ENCODE measurements at regions of chr11 and their contacts with region 1.

Region 1: DNA sequence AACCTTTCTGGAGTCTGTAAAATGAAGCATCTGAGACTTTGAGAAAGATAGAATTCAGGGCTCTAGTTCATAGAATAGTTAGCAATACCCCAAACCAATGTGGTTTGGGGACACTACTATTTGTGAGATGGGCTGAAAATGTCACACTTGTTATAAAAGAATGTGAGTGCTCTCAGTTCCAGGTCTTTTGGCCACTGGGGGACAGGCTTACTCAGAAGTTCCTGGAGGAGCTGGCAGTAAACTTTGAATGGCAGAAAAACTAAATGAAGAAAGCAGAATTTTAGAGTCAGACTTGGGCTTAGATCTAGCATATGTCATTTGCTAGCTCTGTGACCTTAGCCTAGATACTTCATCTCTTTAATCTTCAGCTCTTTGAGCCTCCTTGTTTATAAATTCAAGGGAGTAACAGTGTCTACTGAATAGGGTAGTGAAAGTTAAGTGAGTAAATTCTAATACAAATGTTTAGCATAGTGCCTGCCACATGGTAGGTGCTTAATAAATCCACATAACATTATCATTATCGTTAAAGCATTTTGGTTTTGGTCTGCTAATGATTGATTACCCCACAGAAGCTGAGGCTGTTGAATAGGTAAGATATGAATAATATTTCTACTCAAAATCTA is 3.7 kb downstream of the LYVE1 start:
- DNase-seq: no peak
- H3K4me3 ChIP-seq: peak overlapping the region in 5 of 8 donors; percentile 21 to 62 (median 37)
- H3K27ac ChIP-seq: peak overlapping the region in 6 of 8 donors; percentile 14 to 84 (median 80)
- H3K4me1 ChIP-seq: peaks cover 0 to 58% (median 29%) of the 10 kb centered on the region in 6 donors
- H3K27me3 ChIP-seq: no peaks in the 10 kb centered on the region
- CTCF ChIP-seq: peak in 9 of 11 experiments; percentile 13 to 53 (median 39)
- POLR2A ChIP-seq: no peak

Region 2: DNA sequence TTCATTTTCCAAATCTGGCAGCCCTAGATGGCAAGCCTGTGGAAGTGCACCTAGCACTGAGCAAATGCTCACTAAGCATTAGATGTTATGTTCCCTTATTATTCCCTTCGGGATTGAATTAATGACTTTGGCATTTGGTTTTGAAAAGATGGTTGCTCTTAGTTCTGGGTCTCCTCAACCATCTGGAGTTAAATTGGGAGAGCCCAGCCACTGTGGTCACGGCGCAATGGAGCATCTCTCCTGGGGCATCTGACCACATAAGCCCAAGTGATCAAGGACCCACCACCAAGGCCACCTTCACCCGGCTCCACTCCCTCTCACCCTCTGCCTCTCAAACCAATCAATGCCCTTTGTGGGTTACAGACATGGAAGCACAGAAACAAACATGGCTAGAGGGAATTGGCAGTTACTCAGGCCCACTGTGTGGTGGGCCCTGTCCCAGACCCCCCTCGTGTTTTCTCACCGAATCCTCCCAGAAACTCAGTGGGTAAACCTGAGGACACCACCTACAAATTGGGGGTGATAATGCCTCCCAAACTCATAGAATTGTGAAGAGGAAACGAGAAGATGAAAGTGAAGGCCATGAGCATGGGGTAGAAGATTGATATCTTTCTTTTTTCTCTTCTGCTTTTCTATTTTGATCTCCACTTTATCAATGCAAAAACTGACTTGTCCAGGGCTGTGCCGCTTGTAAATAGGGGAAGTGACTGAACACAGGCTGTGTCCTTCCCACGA is 76.5 kb after region 1 on chr11:
- intact Hi-C with region 1: loop called (anchors 10 kb)
- DNase-seq: no peak
- H3K4me3 ChIP-seq: peak overlapping the region in 1 of 8 donors; percentile 16
- H3K27ac ChIP-seq: peak overlapping the region; percentile 30 to 90 (median 79)
- H3K4me1 ChIP-seq: peaks cover 24 to 80% (median 57%) of the 10 kb centered on the region in 6 donors
- H3K27me3 ChIP-seq: no peaks in the 10 kb centered on the region
- CTCF ChIP-seq: no peak
- POLR2A ChIP-seq: no peak

Region 3: GRCh38 chr11:11416502-11416901 is 851.7 kb after region 1 on chr11:
- intact Hi-C with region 1: no loop called
- DNase-seq: no peak
- H3K4me3 ChIP-seq: no peak overlapping the region
- H3K27ac ChIP-seq: no peak overlapping the region
- H3K4me1 ChIP-seq: peaks cover 0 to 27% (median 14%) of the 10 kb centered on the region in 6 donors
- H3K27me3 ChIP-seq: peaks cover 0 to 57% (median 0%) of the 10 kb centered on the region in 7 donors
- CTCF ChIP-seq: no peak
- POLR2A ChIP-seq: no peak

Measured in spleen (tissue), 13 donors.